OCI-LY7 (cell line): ENCODE measurements at regions of chr1 and their contacts with region 1.

Region 1: GRCh38 chr1:31955917-31956736 is 18.0 kb upstream of the PTP4A2 start:
- DNase-seq: no peak
- H3K4me3 ChIP-seq: no peak overlapping the region
- H3K27ac ChIP-seq: no peak overlapping the region
- H3K4me1 ChIP-seq: peaks cover 16% of the 10 kb centered on the region
- CTCF ChIP-seq: no peak

Region 2: DNA sequence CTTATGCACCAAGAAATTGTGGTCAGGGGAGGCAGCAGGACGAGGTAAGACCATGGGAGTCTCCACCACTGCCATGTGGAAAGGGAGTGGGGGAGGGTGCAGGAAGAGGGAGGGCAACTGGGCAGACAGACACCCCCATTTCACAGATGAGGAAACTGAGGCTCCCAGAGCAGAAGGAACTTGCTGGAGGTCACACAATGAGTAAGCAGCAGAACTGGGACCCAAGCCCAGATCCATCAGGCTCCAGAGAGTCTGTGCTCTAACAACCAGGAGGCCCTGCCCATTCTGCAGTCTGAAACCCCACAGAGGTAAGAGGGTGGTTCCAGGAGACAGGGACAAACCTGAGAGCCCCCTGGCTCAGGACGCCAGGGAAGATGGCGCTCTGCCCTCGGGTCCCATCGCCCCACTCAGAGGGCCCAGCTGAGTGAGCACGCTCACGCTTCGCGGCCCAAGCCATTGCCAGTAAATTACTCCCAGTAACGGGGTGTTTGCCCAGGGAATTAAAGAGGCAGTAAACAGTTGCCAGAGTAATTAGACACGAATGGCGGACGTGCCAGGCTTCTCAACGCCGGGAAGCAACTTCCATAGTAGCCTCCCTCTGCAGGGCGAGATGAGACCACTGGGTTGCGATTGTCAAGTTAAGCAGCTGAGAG is 1291.9 kb before region 1 on chr1:
- CTCF ChIA-PET with region 1: no interaction called
- POLR2A ChIA-PET with region 1: no interaction called
- intact Hi-C with region 1: no loop called
- DNase-seq: no peak
- H3K4me3 ChIP-seq: no peak overlapping the region
- H3K27ac ChIP-seq: no peak overlapping the region
- H3K4me1 ChIP-seq: no peaks in the 10 kb centered on the region
- CTCF ChIP-seq: no peak

Region 3: GRCh38 chr1:30952098-30952497 is 1004.0 kb before region 1 on chr1:
- CTCF ChIA-PET with region 1: no interaction called
- POLR2A ChIA-PET with region 1: no interaction called
- intact Hi-C with region 1: no loop called
- DNase-seq: no peak
- H3K4me3 ChIP-seq: no peak overlapping the region
- H3K27ac ChIP-seq: no peak overlapping the region
- H3K4me1 ChIP-seq: peaks cover 8% of the 10 kb centered on the region
- CTCF ChIP-seq: no peak

Region 4: DNA sequence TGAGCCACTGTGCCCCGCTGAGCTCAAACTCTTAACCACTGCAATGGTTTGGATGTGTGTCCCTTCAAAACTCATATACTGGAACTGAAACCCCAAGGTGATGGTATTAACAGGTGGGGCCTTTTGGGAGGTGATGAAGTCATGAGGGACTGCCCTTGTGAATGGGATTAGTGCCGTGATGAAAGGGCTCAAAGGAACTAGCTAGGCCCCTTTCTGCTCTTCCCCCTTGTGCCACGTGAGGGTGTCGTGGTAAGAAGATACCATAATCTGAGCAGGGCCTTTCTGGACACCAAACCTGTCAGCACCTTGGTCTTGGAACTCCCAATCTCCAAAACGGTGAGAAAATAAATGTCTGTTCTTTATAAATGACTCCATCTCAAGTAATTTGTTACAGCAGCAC is 94.8 kb before region 1 on chr1:
- CTCF ChIA-PET with region 1: no interaction called
- POLR2A ChIA-PET with region 1: interaction called, 3 read pairs
- intact Hi-C with region 1: loop called (anchors 5 kb)
- DNase-seq: peak; percentile 59
- H3K4me3 ChIP-seq: no peak overlapping the region
- H3K27ac ChIP-seq: no peak overlapping the region
- H3K4me1 ChIP-seq: peaks cover 10% of the 10 kb centered on the region
- CTCF ChIP-seq: peak; percentile 49

Region 5: GRCh38 chr1:31944205-31945089 is 11.7 kb before region 1 on chr1:
- CTCF ChIA-PET with region 1: interaction called, 3 read pairs
- POLR2A ChIA-PET with region 1: interaction called, 15 read pairs
- intact Hi-C with region 1: loop called (anchors 2 kb)
- DNase-seq: peak; percentile 90
- H3K4me3 ChIP-seq: peak overlapping the region; percentile 65
- H3K27ac ChIP-seq: peak overlapping the region; percentile 68
- H3K4me1 ChIP-seq: peaks cover 56% of the 10 kb centered on the region
- CTCF ChIP-seq: no peak